ENCODE measurements at regions of chr1 and their contacts with region 1.

Region 1: GRCh38 chr1:54810100-54810942 is 9.2 kb upstream of the TTC22 start:
- DNase-seq: no peak
- ATAC-seq: peak; percentile 73

Region 2: GRCh38 chr1:53860967-53861411 is 949.3 kb before region 1 on chr1:
- intact Hi-C with region 1: loop called (anchors 5 kb)
- DNase-seq: no peak
- ATAC-seq: peak; percentile 57

Region 3: GRCh38 chr1:54121482-54122134 is 688.7 kb before region 1 on chr1:
- intact Hi-C with region 1: loop called (anchors 5 kb)
- DNase-seq: peak; percentile 86
- ATAC-seq: peak; percentile 89

Region 4: GRCh38 chr1:54499360-54500106 is 310.8 kb before region 1 on chr1:
- intact Hi-C with region 1: loop called (anchors 10 kb)
- DNase-seq: no peak
- ATAC-seq: peak; percentile 51

Region 5: GRCh38 chr1:54781023-54781723 is 29.1 kb before region 1 on chr1:
- intact Hi-C with region 1: no loop called
- DNase-seq: no peak
- ATAC-seq: peak; percentile 6

Measured in Right ventricle myocardium inferior (tissue), 1 donor.